Tibial artery (tissue), 4 donors: ENCODE measurements at regions of chr17 and their contacts with region 1.

Region 1: DNA sequence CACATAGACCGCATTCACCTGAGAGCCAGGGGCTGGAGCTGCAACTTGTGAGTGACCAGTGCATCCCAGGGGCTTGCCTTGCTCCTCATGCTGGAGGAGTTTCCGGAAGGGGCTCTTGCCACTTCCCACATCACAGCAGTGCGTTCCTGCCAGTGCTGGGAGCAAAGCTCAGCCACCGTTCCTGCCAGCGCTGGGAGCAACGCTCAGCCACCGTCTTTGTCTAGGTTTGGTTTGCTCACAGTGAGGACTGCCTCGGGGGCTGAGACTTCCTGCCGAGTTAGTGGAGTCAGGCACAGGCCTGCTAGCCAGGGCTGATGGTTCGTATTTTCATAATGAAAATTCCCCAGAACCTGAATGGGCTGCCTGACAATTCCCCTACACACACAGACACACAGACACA is 5.4 kb upstream of the CHRNE start:
- DNase-seq: no peak
- H3K4me3 ChIP-seq: no peak overlapping the region
- H3K27ac ChIP-seq: peak overlapping the region in 1 of 2 donors; percentile 32
- H3K4me1 ChIP-seq: peaks cover 0 to 18% (median 3%) of the 10 kb centered on the region in 4 donors
- H3K27me3 ChIP-seq: peaks cover 0 to 8% of the 10 kb centered on the region in 2 donors
- CTCF ChIP-seq: no peak

Region 2: DNA sequence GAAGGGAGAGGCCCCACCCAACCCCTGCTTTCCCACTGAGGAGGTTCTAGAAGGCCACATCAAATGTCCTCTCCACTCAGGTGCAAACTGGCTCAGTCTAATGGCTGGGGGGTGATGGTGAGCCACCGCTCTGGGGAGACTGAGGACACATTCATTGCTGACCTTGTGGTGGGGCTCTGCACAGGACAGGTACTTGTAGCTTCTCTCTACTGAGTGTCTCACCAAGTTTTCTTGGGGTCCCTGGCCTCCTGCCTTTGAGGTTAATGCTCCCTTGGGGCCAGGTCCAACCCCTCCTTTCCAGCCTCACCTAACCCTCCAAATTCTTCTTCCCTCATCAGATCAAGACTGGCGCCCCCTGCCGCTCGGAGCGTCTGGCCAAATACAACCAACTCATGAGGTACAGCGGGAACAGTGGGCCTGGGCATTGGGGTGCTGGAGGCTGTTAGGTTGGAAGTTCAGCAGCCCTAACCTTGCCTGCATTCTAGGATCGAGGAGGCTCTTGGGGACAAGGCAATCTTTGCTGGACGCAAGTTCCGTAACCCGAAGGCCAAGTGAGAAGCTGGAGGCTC is 48.3 kb after region 1 on chr17:
- intact Hi-C with region 1: no loop called
- DNase-seq: no peak
- H3K4me3 ChIP-seq: no peak overlapping the region
- H3K27ac ChIP-seq: no peak overlapping the region
- H3K4me1 ChIP-seq: peaks cover 0 to 18% (median 8%) of the 10 kb centered on the region in 4 donors
- H3K27me3 ChIP-seq: no peaks in the 10 kb centered on the region
- CTCF ChIP-seq: no peak

Region 3: DNA sequence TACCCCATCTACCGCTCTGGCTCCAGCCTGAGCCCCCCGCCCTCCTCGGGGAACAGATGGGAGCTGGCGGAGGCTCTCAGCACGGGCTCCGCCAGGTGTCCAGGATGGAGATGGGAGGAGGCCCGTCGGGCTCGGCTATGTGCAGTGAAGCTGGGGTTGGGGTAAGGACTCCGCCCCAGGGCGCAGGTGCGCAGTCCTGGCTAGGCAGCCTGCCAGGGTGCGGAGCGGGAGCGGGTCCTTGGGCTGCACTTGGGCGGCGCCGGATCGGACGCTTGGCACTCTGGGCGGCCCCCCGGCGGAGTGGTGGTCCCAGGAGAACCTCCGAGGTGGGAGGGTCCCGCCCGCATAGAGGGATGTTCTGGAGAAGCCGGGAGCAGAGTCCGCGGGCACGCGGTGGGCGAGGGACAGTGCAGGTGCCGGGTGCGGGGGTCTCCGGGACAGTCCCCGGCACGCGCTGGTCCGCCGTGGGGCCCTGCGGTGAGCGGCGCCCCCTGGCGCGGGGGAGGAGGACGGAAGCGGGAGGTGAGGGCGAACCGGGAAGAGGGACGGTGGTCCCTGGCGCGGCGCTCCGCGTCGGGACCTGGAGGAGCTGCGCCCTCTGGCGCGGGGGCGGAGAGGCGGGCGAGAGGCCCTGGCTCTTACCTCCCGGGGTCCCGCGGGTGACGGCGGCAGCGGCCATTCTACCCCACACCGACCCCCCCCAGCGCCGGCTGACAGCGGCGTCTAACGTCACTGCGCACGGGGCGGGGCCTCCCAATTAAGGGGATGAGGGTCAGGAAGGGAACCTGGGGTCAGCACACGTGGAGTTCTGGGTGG is 78.9 kb after region 1 on chr17 and contains the start of gene CAMTA2:
- intact Hi-C with region 1: loop called (anchors 2 kb)
- DNase-seq: peak; percentile 94 to 96
- H3K4me3 ChIP-seq: peak within 1 kb of the TSS; percentile 62 to 97
- H3K27ac ChIP-seq: peak within 1 kb of the TSS; percentile 83 to 95
- H3K4me1 ChIP-seq: peaks cover 0 to 28% (median 21%) of the 10 kb centered on the region in 4 donors
- H3K27me3 ChIP-seq: no peaks in the 10 kb centered on the region
- CTCF ChIP-seq: peak; percentile 61 to 64

Region 4: GRCh38 chr17:5055543-5055942 is 147.2 kb after region 1 on chr17:
- intact Hi-C with region 1: loop called (anchors 5 kb)
- DNase-seq: no peak
- H3K4me3 ChIP-seq: no peak overlapping the region
- H3K27ac ChIP-seq: no peak overlapping the region
- H3K4me1 ChIP-seq: no peaks in the 10 kb centered on the region
- H3K27me3 ChIP-seq: peaks cover 0 to 14% of the 10 kb centered on the region in 2 donors
- CTCF ChIP-seq: no peak

Region 5: DNA sequence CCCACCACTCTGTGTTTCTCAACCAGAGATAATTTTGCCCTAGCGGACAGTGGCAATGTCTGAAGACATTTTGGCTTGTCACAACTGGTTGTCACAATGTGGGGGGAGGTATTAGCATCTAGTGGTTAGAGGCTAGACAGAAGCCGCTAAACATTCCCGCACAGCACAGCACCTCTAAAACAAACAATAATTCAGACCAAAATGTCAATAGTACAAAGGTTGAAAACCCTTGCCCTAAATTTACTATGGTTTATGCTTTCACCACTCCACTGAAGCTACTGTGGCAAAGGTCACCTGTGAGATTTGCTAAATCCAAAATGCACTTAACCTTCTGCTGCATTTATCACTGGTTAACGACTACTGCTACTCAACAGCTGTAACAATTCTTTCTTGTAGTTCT is 497.1 kb after region 1 on chr17:
- intact Hi-C with region 1: no loop called
- DNase-seq: no peak
- H3K4me3 ChIP-seq: no peak overlapping the region
- H3K27ac ChIP-seq: no peak overlapping the region
- H3K4me1 ChIP-seq: no peaks in the 10 kb centered on the region
- H3K27me3 ChIP-seq: no peaks in the 10 kb centered on the region
- CTCF ChIP-seq: no peak